ENCODE measurements at regions of chr13 and their contacts with region 1.

Region 1: DNA sequence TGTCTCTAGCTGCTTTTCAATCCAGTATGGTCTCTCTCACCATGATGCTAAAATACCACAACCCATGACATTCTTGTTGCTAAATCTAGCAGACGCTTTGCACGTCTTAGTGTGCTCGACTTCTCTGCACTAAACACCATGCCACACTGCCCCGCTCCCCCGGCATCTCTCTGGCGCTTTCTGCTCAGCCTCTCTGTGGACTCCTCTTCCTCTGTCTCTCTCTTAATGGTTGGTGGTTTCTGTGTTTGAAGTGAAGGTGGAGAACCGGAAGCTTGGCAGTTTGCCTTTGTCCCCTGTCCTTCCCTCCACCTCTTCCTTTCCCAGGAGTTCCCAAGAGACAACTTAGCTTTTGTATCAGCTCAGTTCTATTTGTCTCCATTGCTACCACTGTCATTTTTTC is 8.8 kb downstream of the ERCC5 start:
- DNase-seq: peak in 3 of 5 donors; percentile 11 to 31 (median 20)
- H3K4me3 ChIP-seq: no peak overlapping the region
- H3K4me3 Mint-ChIP-seq: peak overlapping the region in 5 of 8 donors; percentile 35 to 73 (median 65)
- H3K27ac ChIP-seq: peak overlapping the region; percentile 29
- H3K27ac Mint-ChIP-seq: peak overlapping the region in 5 of 7 donors; percentile 84 to 92 (median 90)
- H3K4me1 ChIP-seq: peaks cover 37% of the 10 kb centered on the region
- H3K4me1 Mint-ChIP-seq: peaks cover 40 to 50% (median 42%) of the 10 kb centered on the region in 4 donors
- H3K27me3 ChIP-seq: no peaks in the 10 kb centered on the region
- H3K27me3 Mint-ChIP-seq: no peaks in the 10 kb centered on the region

Region 2: DNA sequence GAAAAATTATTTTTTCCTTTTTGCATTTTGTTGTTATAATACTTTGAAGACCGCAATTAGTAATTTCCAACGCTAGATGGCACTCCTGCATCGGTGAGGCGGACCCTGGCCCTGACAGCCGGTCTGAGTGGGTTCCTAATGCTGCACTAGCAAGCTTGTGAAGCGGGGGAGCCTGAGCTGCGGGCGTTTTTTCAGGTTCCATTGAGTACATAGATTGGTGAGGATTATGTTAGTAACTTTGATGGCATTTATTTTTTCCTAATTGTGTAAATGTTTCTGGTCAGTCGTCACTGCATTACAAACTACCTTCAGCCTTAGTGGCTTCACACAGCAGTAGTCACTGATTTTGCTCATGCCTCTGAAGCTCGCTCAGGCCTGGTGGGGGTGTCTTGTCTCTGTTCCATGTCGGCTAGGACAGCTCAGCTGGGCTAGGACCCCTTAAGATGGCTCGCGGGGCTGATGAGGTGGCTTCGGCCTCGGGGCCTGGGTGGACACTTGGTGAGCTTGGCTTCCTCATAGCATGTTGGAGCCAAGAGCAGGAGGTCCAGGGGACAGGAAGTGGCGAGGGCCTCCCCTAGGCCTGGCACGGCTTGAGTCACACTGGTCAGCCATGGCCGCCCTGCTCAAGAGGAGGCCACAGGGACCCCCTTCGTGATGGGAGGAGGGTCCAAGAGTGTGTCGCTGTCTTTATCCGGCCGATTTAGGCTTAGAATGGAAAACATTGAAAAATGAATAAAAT is 16.2 kb after region 1 on chr13:
- CTCF ChIA-PET with region 1: interaction called, 19 read pairs
- POLR2A ChIA-PET with region 1: interaction called, 3 read pairs
- intact Hi-C with region 1: no loop called
- DNase-seq: peak; percentile 36 to 49 (median 42)
- H3K4me3 ChIP-seq: no peak overlapping the region
- H3K4me3 Mint-ChIP-seq: peak overlapping the region in 3 of 8 donors; percentile 17 to 72 (median 56)
- H3K27ac ChIP-seq: no peak overlapping the region
- H3K27ac Mint-ChIP-seq: peak overlapping the region in 6 of 7 donors; percentile 14 to 84 (median 80)
- H3K4me1 ChIP-seq: peaks cover 14% of the 10 kb centered on the region
- H3K4me1 Mint-ChIP-seq: peaks cover 18 to 35% (median 23%) of the 10 kb centered on the region in 4 donors
- H3K27me3 ChIP-seq: no peaks in the 10 kb centered on the region
- H3K27me3 Mint-ChIP-seq: no peaks in the 10 kb centered on the region